Naive thymus-derived CD4-positive, alpha-beta T cell (primary cell): ENCODE measurements at regions of chr6 and their contacts with region 1.

Region 1: DNA sequence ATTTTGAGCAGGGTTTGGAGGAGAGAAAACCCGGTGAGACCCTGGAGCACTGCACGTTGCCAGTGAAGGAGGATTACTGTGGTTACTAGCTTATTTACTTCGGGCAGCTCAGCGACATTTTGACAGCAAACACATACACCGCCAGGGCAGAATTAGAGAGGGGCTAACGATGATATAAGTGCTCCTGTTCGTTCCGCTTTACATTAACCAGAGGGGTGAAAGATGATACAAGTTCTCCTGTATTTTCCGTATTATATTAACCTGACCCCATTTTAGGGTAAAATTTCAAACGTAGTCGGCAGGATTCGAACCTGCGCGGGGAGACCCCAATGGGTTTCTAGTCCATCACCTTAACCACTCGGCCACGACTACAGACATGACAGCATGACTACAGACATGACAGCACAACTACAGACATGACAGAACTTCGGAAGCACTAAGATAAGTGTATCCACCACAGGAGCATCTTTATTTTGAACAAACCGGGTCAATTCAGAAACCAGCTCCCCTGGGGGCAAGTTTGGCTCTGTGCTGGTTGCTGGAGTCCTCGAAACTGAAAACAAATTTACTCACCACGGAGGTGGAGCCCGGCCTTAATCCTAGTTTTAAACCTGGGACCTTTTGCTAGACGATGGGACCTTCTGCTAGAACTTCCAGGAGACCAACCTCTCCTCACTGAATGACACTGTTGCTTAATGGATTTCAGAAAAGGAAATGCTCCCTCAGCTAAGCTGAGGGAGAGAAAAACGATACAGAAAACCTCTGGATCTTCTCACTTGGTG is 80.4 kb upstream of the ZNF184 start:
- DNase-seq: no peak
- ATAC-seq: no peak
- H3K4me3 ChIP-seq: no peak overlapping the region
- H3K4me3 Mint-ChIP-seq: peak overlapping the region in 3 of 10 donors; percentile 6 to 59 (median 49)
- H3K27ac ChIP-seq: no peak overlapping the region
- H3K27ac Mint-ChIP-seq: peak overlapping the region in 2 of 9 donors; percentile 13 to 68
- H3K4me1 ChIP-seq: no peaks in the 10 kb centered on the region
- H3K4me1 Mint-ChIP-seq: peaks cover 3 to 20% (median 4%) of the 10 kb centered on the region in 7 donors
- H3K27me3 ChIP-seq: peaks cover 0 to 10% of the 10 kb centered on the region in 2 donors
- H3K27me3 Mint-ChIP-seq: peaks cover 76 to 91% (median 87%) of the 10 kb centered on the region in 5 donors

Region 2: DNA sequence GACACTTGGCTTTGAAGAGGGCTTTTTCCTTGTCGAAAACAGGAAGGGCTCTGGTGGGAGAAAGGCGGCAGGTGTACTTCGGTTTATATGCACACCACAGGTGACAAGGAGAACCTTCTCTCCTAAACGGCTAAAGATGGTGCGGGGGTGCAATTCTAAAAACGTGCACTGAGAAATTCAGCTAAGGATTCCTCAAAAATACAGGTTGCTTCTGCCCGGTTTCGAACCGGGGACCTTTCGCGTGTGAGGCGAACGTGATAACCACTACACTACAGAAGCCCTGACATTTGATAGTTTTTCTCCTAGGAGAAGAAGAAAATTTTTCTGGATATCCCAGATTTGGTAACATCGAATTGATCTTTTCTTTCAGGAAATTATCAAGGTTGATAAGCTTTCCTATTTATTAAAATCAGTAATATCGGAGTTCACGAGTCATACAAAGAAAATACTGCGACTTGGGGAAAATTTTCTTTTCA is 273.2 kb before region 1 on chr6:
- CTCF ChIA-PET with region 1: no interaction called
- POLR2A ChIA-PET with region 1: no interaction called
- intact Hi-C with region 1: loop called in 1 of 2 experiments (anchors 5 kb)
- DNase-seq: peak in 1 of 9 donors; percentile 13
- ATAC-seq: no peak
- H3K4me3 ChIP-seq: no peak overlapping the region
- H3K4me3 Mint-ChIP-seq: peak overlapping the region in 5 of 10 donors; percentile 28 to 51 (median 44)
- H3K27ac ChIP-seq: no peak overlapping the region
- H3K27ac Mint-ChIP-seq: peak overlapping the region in 5 of 9 donors; percentile 59 to 83 (median 77)
- H3K4me1 ChIP-seq: no peaks in the 10 kb centered on the region
- H3K4me1 Mint-ChIP-seq: peaks cover 0 to 19% (median 4%) of the 10 kb centered on the region in 7 donors
- H3K27me3 ChIP-seq: peaks cover 32 to 52% of the 10 kb centered on the region in 2 donors
- H3K27me3 Mint-ChIP-seq: peaks cover 74 to 88% (median 86%) of the 10 kb centered on the region in 5 donors

Region 3: GRCh38 chr6:27592481-27593199 is 39.3 kb after region 1 on chr6:
- CTCF ChIA-PET with region 1: no interaction called
- POLR2A ChIA-PET with region 1: no interaction called
- intact Hi-C with region 1: loop called in 1 of 2 experiments (anchors 2 kb)
- DNase-seq: peak in 4 of 9 donors; percentile 10 to 58 (median 28)
- ATAC-seq: no peak
- H3K4me3 ChIP-seq: no peak overlapping the region
- H3K4me3 Mint-ChIP-seq: no peak overlapping the region
- H3K27ac ChIP-seq: no peak overlapping the region
- H3K27ac Mint-ChIP-seq: no peak overlapping the region
- H3K4me1 ChIP-seq: peaks cover 0 to 11% of the 10 kb centered on the region in 2 donors
- H3K4me1 Mint-ChIP-seq: peaks cover 0 to 4% (median 0%) of the 10 kb centered on the region in 7 donors
- H3K27me3 ChIP-seq: peaks cover 25 to 29% of the 10 kb centered on the region in 2 donors
- H3K27me3 Mint-ChIP-seq: peaks cover 24 to 46% (median 43%) of the 10 kb centered on the region in 5 donors

Region 4: DNA sequence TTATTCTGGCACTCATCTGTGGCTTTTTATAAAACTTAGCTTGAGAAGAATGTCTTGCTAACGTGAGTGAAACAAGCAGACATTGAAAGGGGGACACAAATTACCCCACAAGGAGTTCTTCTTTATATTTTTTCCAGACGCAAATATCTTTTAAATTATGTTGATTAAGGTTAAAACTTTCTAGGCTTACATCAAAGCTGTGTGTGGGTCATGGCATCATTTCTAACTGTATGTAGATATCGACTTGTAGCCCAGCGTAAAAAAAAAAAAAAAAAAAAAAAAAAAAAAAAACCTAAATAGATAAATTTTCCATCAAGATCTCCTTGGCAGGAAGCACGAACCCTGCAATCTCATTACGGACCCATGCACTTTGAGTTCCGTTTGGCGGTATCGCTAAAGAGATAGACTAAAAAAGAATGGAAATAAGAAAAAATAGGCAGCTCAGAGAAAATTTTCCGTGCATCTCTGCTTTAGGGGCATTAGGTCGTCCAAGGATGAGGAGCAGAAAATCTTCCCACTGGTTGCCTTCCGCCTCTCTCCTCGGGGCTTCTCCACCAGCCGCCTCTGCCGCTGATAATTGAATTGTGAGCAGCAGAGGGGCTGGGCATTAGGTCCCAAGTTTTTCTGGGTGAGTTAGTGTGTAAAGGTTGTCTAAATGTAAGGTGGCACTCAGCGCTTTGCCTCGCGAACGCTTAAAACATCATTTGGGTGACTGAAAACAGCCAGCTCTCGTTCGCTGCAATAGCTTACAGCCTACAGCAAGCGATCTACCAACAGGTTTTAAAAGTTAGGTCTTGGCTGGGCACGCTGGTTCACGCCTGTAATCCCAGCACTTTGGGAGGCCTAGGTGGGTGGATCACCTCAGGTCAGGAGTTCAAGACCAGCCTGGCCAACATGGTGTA is 1176.4 kb after region 1 on chr6:
- CTCF ChIA-PET with region 1: no interaction called
- POLR2A ChIA-PET with region 1: no interaction called
- intact Hi-C with region 1: loop called in 1 of 2 experiments (anchors 10 kb)
- DNase-seq: no peak
- ATAC-seq: no peak
- H3K4me3 ChIP-seq: peak overlapping the region; percentile 49
- H3K4me3 Mint-ChIP-seq: peak overlapping the region; percentile 55 to 88 (median 84)
- H3K27ac ChIP-seq: no peak overlapping the region
- H3K27ac Mint-ChIP-seq: peak overlapping the region in 8 of 9 donors; percentile 8 to 93 (median 74)
- H3K4me1 ChIP-seq: peaks cover 3 to 5% of the 10 kb centered on the region in 2 donors
- H3K4me1 Mint-ChIP-seq: peaks cover 10 to 30% (median 22%) of the 10 kb centered on the region in 7 donors
- H3K27me3 ChIP-seq: peaks cover 11 to 42% of the 10 kb centered on the region in 2 donors
- H3K27me3 Mint-ChIP-seq: peaks cover 87 to 96% (median 92%) of the 10 kb centered on the region in 5 donors

Region 5: DNA sequence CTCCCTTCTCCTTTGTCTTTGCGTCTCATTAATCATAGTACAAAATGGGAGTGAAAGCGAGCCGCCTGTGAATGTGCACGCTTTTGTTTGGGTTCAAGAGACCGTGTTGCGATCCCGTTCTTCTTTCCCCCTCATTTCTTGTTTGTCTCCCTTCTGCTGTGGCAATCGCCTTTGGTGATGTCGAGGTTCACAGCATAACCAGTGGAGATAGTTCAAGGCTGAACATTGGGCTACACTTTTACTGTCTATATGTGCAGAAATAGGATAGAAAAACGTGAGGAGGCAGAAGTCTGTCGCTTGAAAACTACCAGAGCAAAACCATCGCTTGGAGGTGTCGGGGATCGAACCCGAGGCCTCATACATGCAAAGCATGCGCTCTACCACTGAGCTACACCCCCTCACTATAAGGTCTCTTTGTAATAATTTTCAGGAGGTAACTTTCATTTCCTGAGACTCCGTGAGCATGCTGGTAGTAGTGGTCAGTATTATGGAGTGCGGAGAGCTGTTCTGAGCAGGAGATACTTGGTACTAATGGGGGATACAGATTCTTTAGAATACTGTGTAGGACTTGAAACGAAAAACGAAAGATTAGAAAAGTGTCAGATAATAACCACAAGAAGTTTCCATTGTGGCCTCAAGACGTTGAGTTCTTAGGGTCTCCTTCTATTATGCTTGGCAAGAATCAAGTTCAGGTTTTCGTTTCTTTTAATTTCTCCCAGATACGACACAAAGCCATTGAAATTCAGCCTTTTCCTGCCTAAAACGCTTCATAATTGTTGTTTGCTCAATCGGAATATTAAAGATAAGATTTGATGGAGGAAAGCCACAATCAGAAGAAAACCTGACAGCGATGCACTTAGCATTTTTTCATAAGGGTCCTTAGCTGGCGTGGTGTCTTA is 1263.8 kb after region 1 on chr6:
- CTCF ChIA-PET with region 1: no interaction called
- POLR2A ChIA-PET with region 1: no interaction called
- intact Hi-C with region 1: loop called in 1 of 2 experiments (anchors 10 kb)
- DNase-seq: no peak
- ATAC-seq: no peak
- H3K4me3 ChIP-seq: no peak overlapping the region
- H3K4me3 Mint-ChIP-seq: peak overlapping the region in 2 of 10 donors; percentile 7 to 8
- H3K27ac ChIP-seq: no peak overlapping the region
- H3K27ac Mint-ChIP-seq: peak overlapping the region in 2 of 9 donors; percentile 44 to 49
- H3K4me1 ChIP-seq: no peaks in the 10 kb centered on the region
- H3K4me1 Mint-ChIP-seq: peaks cover 2 to 21% (median 9%) of the 10 kb centered on the region in 7 donors
- H3K27me3 ChIP-seq: peaks cover 23 to 45% of the 10 kb centered on the region in 2 donors
- H3K27me3 Mint-ChIP-seq: peaks cover 75 to 91% (median 88%) of the 10 kb centered on the region in 5 donors